ENCODE measurements at regions of chr14 and their contacts with region 1.

Region 1: DNA sequence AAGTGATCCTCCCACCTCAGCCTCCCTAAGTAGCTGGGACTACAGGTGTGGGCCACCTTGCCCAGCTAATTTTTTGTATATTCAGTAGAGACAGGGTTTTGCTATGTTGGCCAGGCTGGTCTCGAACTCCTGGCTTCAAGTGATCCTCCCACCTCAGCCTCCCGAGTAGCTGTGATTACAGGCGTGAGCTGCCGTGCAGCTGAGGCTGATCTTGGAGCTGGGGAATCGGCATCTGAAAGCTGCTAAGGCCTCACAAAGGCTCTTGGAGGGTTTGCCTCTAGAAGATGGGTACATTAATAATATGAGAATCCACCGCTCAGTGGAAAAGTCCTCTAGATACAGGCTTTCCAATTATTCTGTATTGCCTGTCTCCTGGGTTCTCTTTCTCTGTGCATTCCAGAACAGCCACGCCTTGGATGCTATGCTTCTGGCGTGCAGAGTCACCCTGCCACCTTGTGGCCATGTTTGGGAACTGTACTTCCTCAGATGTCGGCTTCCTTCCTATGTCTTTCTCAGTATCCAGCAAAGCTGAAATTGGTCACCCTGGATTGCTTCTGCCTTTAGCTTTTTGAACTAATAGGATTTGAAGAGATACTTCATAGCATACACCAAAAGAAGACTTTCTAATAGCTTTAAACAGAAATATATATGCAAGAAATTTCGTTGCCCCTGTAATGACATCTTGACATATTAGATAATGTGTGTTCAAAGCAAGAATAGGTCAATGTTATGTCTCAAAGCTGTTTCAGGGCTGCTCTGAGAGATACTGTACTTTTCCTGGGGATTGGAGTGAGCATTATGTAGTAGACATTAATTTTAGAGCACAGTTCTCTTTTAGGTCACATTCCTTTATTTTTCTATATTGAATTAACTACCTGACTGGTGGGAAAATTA is 75.4 kb downstream of the SNAPC1 start:
- DNase-seq: peak; percentile 59
- H3K4me3 Mint-ChIP-seq: no peak overlapping the region
- H3K27ac Mint-ChIP-seq: no peak overlapping the region
- H3K4me1 Mint-ChIP-seq: peaks cover 13% of the 10 kb centered on the region
- H3K27me3 Mint-ChIP-seq: peaks cover 21% of the 10 kb centered on the region

Region 2: DNA sequence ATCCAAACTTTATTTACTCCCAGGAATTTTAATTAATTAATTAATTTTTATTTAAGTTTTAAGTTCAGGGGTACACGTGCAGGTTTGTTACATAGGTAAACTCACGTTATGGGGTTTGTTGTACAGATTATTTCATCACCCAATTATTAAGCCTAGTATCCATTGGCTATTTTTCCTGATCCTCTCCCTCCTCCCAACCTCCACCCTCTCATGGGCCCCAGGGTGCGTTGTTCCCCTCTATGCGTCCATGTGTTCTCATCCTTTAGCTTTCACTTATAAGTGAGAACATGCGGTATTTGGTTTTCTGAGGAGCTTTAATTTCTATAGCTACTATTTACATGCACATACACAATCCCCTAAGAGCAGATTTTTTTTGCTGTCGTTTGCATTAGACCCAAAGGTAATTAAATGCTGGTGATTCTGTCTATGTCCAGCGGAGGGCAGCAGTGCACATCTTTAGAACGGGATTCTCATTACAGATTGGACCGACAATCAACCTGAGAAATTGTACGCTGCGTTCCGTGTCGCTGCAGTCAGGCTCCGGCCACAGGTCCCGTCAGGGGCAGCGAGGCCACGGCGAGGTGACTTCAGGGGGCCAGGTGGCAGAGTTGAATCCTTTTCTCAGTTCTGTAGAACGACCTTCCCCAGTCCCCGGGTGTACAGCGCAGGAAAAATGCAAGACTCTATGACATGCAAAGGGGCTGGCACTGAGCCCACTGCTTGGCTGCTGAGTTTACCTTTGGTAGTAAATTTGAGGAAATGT is 568.1 kb before region 1 on chr14:
- intact Hi-C with region 1: loop called (anchors 10 kb)
- DNase-seq: peak; percentile 70
- H3K4me3 Mint-ChIP-seq: peak overlapping the region; percentile 54
- H3K27ac Mint-ChIP-seq: no peak overlapping the region
- H3K4me1 Mint-ChIP-seq: peaks cover 5% of the 10 kb centered on the region
- H3K27me3 Mint-ChIP-seq: peaks cover 57% of the 10 kb centered on the region

Region 3: DNA sequence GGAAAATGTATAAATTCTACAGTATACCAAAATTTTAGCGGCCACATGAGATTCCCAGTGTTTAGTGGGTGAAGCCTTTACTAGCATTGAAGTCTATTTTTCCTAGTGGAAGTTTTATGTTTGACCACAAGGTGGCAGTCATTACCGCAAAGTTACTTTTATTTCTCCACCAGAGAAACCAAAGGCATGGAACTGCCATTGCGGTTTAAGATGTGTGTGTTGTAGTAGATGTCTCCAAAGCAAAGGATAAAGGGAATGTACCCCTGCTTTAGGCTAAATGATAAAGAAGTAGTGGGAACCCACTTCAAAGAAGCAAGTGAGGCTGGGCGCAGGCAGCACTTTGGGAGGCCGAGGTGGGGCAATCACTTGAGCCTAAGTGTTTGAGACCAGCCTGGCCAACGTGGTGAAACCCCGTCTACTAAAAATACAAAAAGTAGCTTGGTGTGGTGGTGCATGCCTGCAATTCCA is 375.7 kb before region 1 on chr14:
- intact Hi-C with region 1: loop called (anchors 1 kb)
- DNase-seq: no peak
- H3K4me3 Mint-ChIP-seq: no peak overlapping the region
- H3K27ac Mint-ChIP-seq: peak overlapping the region; percentile 29
- H3K4me1 Mint-ChIP-seq: peaks cover 44% of the 10 kb centered on the region
- H3K27me3 Mint-ChIP-seq: no peaks in the 10 kb centered on the region

Region 4: DNA sequence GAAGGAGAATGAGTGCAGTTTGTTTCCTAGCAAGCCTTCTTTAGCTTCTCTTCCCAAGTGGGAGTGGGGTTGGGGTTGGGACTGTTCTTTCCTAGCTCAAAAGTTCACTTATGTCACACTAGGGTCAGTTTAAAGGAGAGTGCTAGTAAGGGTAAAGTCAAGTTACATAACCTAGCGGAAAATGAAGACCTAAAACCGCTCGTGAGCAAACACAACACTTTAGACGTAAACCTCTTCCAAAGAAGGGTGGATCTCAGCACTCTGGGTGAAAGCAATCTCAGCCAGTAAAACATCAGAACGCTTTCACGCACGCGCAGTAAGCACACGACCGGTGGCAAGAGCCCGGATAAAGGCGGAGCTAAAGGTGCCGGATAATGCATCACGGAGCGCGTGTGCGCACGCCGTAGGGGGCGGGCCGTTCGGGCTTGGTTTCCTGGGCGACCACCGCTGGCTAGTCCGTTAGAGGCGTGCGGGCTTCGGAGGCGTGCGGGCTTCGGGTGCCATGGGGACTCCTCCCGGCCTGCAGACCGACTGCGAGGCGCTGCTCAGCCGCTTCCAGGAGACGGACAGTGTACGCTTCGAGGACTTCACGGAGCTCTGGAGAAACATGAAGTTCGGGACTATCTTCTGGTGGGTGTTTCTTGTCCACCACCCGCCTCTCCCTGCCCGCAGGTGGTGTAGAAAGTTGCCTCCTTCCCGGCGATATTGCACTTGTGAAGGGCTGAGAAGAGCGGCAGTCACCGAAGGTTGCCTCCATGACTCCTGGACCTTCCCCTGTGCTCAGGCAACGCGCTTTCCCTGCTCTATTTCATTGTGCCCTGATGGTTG is 75.4 kb before region 1 on chr14 and contains the start of gene SNAPC1:
- intact Hi-C with region 1: loop called (anchors 1 kb)
- DNase-seq: peak; percentile 98
- H3K4me3 Mint-ChIP-seq: peak within 1 kb of the TSS; percentile 94
- H3K27ac Mint-ChIP-seq: peak within 1 kb of the TSS; percentile 93
- H3K4me1 Mint-ChIP-seq: peaks cover 36% of the 10 kb centered on the region
- H3K27me3 Mint-ChIP-seq: peaks cover 3% of the 10 kb centered on the region
- total RNA-seq, gene SNAPC1: 10.2 and 10.5 TPM in 2 replicates

Measured in activated T-helper 2 cell treated with anti-CD3 and anti-CD28 coated beads, Interferon-gamma antibody, Interleukin-2, Interleukin-4, amounts not matched to agents 10 μg/mL and 5 μg/mL and 100 μg/mL, durations not matched to agents 14 hours and 24 hours and 36 hours (primary cell).